ENCODE measurements at regions of chr19 and their contacts with region 1.

Region 1: GRCh38 chr19:10388957-10389356 is 8.6 kb upstream of the TYK2 start:
- DNase-seq: peak; percentile 96
- ATAC-seq: peak; percentile 73
- H3K4me3 Mint-ChIP-seq: no peak overlapping the region
- H3K27ac Mint-ChIP-seq: no peak overlapping the region
- H3K4me1 Mint-ChIP-seq: peaks cover 5% of the 10 kb centered on the region; the same call in 1 of the 2 replicates
- H3K27me3 Mint-ChIP-seq: peaks cover 3% of the 10 kb centered on the region; the same call in 1 of the 2 replicates
- CTCF ChIP-seq: peak; percentile 90

Region 2: DNA sequence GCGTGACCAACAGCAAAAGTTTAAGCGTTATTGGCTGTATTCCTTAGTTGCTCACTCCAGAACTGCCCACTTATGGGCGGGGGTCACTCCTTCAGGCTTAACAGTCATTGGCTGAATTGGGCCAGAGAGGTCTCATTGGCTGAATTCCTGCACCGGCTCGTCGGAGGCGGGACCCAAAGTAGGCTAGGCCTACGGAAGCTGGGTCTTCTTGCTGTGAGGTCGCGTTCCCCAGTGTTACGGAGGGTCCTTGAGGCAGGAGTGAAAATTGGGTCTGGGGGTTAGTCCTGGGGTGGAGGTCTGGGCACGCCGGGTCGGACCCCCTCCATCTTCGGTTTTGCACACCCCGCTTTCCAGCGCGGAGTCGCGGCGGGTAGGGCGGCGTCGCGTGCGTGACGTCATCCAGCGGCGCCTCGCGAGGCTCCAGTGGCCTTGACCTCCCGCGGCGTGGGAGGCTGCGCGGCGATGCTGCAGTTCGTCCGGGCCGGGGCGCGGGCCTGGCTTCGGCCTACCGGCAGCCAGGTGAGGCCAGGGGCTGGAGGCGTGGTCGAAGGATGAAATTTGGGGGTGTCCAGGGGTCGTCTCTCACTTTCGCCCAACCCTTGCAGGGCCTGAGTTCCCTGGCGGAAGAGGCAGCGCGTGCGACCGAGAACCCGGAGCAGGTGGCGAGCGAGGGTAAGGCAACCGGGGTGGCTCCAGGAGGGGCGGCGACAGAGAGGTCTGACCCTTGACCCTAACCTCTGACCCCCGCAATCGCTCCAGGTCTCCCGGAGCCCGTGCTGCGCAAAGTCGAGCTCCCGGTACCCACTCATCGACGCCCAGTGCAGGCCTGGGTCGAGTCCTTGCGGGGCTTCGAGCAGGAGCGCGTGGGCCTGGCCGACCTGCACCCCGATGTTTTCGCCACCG is 136.9 kb before region 1 on chr19 and contains the start of gene MRPL4:
- CTCF ChIA-PET with region 1: interaction called, 149 read pairs
- POLR2A ChIA-PET with region 1: no interaction called
- DNase-seq: peak; percentile 96
- ATAC-seq: peak; percentile 98
- H3K4me3 Mint-ChIP-seq: peak within 1 kb of the TSS; percentile 95
- H3K27ac Mint-ChIP-seq: peak within 1 kb of the TSS; percentile 96
- H3K4me1 Mint-ChIP-seq: peaks cover 5% of the 10 kb centered on the region
- H3K27me3 Mint-ChIP-seq: peaks cover 2% of the 10 kb centered on the region; the same call in 1 of the 2 replicates
- CTCF ChIP-seq: no peak
- total RNA-seq, gene MRPL4: 109 to 112 TPM (median 110 TPM) in 3 replicates

Region 3: DNA sequence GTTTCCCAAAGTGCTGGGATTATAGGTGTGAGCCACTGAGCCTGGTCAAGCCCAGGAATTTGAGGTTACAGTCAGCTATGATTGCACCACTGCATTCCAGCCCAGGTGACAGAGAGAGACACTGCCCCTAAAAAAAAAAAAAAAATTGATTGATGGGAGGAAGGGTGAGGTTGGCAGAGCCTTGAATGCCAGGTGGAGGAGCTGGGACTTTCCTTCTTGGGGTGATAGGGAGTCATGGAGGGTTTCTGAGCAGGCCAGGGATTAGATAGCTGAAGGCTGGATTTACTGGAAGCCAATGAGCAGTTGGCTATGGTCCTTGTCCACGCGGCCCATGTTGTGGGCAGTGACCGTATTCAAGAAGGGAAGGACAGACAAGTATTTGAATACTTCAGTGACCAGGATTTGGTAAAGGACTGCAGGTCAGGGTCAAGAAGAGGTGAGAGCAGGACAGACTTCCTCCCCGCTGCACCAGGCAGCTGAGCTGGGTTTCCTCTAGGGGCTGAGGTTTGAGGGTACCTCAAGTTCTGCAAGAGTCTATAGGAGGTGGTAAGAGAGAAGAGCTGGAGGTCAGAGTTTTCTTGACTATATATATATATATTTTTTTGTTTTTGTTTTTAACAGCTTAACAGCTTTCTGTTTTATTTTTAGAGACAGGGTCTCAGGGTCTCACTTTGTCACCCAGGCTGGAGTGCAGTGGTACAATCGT is 109.1 kb before region 1 on chr19:
- CTCF ChIA-PET with region 1: interaction called, 10 read pairs
- POLR2A ChIA-PET with region 1: no interaction called
- DNase-seq: no peak
- ATAC-seq: no peak
- H3K4me3 Mint-ChIP-seq: no peak overlapping the region
- H3K27ac Mint-ChIP-seq: 0 out of 2 replicates have a peak overlapping the region, but pooled peaks have one; percentile 2
- H3K4me1 Mint-ChIP-seq: no peaks in the 10 kb centered on the region
- H3K27me3 Mint-ChIP-seq: peaks cover 4% of the 10 kb centered on the region
- CTCF ChIP-seq: no peak

Region 4: DNA sequence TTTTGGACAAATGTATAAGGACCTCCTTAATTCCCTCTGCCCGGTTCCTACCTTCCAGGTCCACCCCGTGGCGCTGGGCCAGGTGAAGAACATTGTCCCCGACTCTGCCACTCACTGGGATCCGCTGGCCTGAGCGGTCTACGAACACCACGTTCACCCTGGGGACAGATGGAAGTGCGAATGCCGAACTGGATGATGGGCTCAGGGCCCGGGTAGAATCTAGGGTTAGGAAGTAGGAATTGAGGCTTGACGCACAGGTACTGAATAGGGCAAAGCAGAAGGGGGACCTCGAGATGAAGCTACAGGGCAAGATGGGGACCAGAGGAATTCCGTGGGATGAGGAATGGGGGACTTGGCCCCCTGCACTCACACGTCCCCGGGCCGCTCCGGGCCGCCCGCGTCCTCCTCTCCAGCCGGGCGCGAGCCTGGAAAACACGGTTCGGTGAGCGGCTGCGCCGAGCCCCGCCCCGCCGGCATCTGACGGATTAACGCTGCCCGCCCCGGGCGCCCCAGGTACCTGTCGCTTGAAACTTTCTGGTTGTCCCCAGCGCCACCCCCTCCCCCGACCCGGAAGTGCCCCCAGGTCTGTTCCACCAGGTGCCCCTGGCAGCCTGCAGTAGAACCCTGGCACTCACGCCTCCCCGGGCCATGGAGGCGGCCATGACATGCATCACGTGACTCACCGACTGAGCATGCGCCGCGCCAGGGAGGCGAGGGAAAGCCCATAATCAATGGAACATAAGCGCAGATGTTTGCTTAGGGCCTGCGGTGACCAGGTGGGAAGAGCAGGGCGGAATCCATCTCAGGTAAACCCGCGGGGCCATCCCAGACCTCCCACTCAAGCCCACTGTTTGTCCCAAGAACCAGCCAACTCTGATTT is 73.4 kb before region 1 on chr19 and contains the start of gene FDX2:
- CTCF ChIA-PET with region 1: interaction called, 11 read pairs
- POLR2A ChIA-PET with region 1: no interaction called
- DNase-seq: peak; percentile 92
- ATAC-seq: peak; percentile 84
- H3K4me3 Mint-ChIP-seq: peak within 1 kb of the TSS; percentile 92
- H3K27ac Mint-ChIP-seq: peak within 1 kb of the TSS; percentile 95
- H3K4me1 Mint-ChIP-seq: peaks cover 13% of the 10 kb centered on the region
- H3K27me3 Mint-ChIP-seq: no peaks in the 10 kb centered on the region
- CTCF ChIP-seq: no peak
- total RNA-seq, gene FDX2: 26.2 to 27.0 TPM (median 26.6 TPM) in 3 replicates

Region 5: GRCh38 chr19:10353793-10354391 is 35.1 kb before region 1 on chr19:
- CTCF ChIA-PET with region 1: interaction called, 14 read pairs
- POLR2A ChIA-PET with region 1: interaction called, 3 read pairs
- DNase-seq: peak; percentile 100
- ATAC-seq: peak; percentile 69
- H3K4me3 Mint-ChIP-seq: peak overlapping the region; percentile 84
- H3K27ac Mint-ChIP-seq: peak overlapping the region; percentile 94
- H3K4me1 Mint-ChIP-seq: peaks cover 14% of the 10 kb centered on the region
- H3K27me3 Mint-ChIP-seq: no peaks in the 10 kb centered on the region
- CTCF ChIP-seq: no peak

Region 6: DNA sequence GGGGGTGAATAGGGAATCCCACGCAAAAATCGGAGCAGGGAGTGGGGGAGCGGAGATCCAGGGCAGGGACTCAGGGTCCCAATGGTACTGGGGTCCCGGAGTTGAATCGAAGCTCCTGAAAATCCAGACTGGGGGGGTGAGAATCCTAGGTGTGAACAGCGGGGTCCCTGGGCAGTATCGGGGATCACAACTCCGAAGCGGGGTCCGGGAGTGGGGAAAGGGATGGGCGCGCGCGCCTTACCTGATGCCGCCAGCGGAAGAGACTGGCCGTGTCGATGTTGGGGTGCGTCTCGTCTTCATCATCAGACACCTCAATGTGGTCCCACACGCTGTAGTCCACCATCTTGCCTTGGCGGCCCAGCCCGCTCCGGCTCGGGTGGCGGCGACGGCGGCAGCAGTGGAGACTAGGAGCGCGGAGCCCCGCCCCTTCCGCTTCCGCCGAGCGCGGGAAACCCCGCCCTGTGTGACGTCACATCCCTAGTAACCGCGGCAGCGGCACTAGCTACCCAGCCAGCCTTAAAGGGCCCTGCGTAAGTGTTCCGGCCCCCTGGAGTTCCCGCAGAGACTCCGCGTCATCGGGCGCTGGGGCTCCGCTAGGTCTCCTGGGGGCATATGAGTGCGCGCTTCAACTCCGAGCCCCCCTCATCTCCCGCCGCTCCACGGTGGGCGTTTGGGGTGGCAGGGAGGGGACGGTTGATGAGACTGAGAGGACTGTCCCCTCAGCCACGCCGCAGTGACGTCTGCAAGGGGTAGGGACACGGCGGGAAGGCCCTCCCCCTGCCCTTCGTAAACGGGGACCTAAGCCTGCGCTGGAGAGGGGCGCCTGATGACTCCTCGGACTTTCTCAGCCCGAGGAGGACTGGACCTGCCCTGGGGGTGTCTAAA is 14.4 kb after region 1 on chr19 and contains the start of gene CDC37:
- CTCF ChIA-PET with region 1: interaction called, 42 read pairs
- POLR2A ChIA-PET with region 1: no interaction called
- DNase-seq: peak; percentile 98
- ATAC-seq: peak; percentile 79
- H3K4me3 Mint-ChIP-seq: peak within 1 kb of the TSS; percentile 96
- H3K27ac Mint-ChIP-seq: peak within 1 kb of the TSS; percentile 89
- H3K4me1 Mint-ChIP-seq: peaks cover 19% of the 10 kb centered on the region
- H3K27me3 Mint-ChIP-seq: peaks cover 40% of the 10 kb centered on the region
- CTCF ChIP-seq: no peak
- total RNA-seq, gene CDC37: 163 to 204 TPM (median 164 TPM) in 3 replicates

Region 7: DNA sequence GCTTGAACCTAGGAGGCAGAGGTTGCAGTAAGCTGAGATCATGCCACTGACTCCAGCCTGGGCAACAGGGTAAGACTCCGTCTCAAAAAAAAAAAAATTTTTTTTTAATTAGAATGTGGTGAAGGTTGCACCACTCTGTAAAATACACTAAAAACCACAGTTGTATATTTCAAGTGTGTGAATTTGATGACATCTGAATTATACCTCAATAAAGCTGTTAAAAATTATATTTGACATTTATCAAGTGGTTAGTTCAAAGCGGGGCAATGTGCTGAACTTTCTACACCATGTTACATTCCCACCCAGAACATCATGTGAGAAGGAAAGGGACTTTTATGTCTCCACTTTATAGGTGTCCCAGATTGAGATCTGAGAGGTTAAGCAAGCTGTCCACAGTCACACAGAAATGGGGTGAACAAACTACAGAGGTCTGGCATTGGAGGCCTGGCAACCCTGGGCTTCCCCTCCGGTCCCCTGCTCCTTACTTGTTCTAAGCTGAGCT is 134.2 kb after region 1 on chr19:
- CTCF ChIA-PET with region 1: no interaction called
- POLR2A ChIA-PET with region 1: no interaction called
- DNase-seq: no peak
- ATAC-seq: no peak
- H3K4me3 Mint-ChIP-seq: no peak overlapping the region
- H3K27ac Mint-ChIP-seq: no peak overlapping the region
- H3K4me1 Mint-ChIP-seq: peaks cover 17% of the 10 kb centered on the region
- H3K27me3 Mint-ChIP-seq: peaks cover 21% of the 10 kb centered on the region
- CTCF ChIP-seq: no peak

Measured in WTC11 (cell line).